Heart left ventricle (tissue), 16 donors: ENCODE measurements at regions of chr18 and their contacts with region 1.

Region 1: GRCh38 chr18:45505497-45506206 is 109.6 kb upstream of the SLC14A2 start:
- DNase-seq: peak in 4 of 5 donors; percentile 12 to 41 (median 25)
- ATAC-seq: peak in 3 of 4 donors; percentile 47 to 79 (median 61)
- H3K4me3 ChIP-seq: no peak overlapping the region
- H3K27ac ChIP-seq: peak overlapping the region in 9 of 12 donors; percentile 11 to 64 (median 35)
- H3K4me1 ChIP-seq: peaks cover 0 to 32% (median 6%) of the 10 kb centered on the region in 12 donors
- H3K27me3 ChIP-seq: no peaks in the 10 kb centered on the region
- CTCF ChIP-seq: no peak
- POLR2A ChIP-seq: no peak

Region 2: GRCh38 chr18:45562567-45563479 is 57.2 kb after region 1 on chr18:
- intact Hi-C with region 1: loop called in 1 of 10 experiments (anchors 5 kb)
- DNase-seq: peak; percentile 37 to 76 (median 55)
- ATAC-seq: peak; percentile 21 to 59 (median 40)
- H3K4me3 ChIP-seq: no peak overlapping the region
- H3K27ac ChIP-seq: peak overlapping the region in 11 of 12 donors; percentile 27 to 89 (median 57)
- H3K4me1 ChIP-seq: peaks cover 0 to 19% (median 0%) of the 10 kb centered on the region in 12 donors
- H3K27me3 ChIP-seq: peaks cover 0 to 4% (median 0%) of the 10 kb centered on the region in 9 donors
- CTCF ChIP-seq: no peak
- POLR2A ChIP-seq: no peak

Region 3: DNA sequence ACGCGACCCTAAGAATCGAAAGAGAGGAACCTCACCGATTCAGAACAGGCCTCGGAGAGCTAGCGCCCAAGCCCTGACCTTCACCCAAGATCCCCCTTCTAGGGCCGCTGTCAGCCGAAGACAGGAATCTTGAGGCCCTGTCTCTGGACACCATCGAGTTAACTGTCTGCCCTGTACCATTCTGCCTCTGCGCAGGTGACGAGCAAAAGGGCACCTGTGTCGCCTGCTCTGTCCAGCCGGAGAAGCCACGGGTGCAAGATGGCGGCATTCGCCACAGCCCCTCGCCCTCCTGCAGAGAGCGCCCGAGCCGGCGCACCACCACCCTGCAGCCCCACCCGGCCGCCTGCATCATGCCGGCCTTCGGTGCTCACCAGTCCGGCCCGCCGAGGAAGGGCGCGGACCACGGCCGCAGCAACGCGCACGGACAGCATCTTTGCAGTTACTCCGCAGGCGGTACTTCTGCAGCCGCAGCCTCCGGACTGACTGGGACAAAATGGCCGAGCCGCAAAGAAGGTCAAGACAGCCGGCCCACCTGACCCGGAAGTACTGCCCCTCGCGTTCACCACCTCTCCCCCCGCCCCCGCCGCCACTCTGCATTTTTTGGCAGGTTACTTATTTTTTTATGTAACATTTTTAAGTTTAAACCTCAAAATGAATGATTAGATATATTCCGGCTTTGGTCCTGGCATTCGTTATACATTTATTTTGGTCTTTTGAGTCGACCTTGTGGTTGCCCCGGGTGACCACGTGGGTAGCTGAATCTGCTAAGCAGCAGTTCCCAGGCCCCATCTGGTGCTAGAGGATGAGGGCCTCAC is 592.4 kb after region 1 on chr18 and contains the start of gene ATP5F1A:
- intact Hi-C with region 1: loop called in 1 of 10 experiments (anchors 10 kb)
- DNase-seq: peak; percentile 89 to 95 (median 94)
- ATAC-seq: peak; percentile 72 to 95 (median 83)
- H3K4me3 ChIP-seq: peak within 1 kb of the TSS; percentile 69 to 98 (median 84)
- H3K27ac ChIP-seq: peak within 1 kb of the TSS; percentile 86 to 99 (median 96)
- H3K4me1 ChIP-seq: peaks cover 0 to 46% (median 31%) of the 10 kb centered on the region in 12 donors
- H3K27me3 ChIP-seq: no peaks in the 10 kb centered on the region
- CTCF ChIP-seq: peak in 1 of 12 donors; percentile 20
- POLR2A ChIP-seq: peak; percentile 71 to 83
- total RNA-seq, gene ATP5F1A: 1,078 to 3,149 (median 1,758) TPM